ENCODE measurements at regions of chr5 and their contacts with region 1.

Region 1: DNA sequence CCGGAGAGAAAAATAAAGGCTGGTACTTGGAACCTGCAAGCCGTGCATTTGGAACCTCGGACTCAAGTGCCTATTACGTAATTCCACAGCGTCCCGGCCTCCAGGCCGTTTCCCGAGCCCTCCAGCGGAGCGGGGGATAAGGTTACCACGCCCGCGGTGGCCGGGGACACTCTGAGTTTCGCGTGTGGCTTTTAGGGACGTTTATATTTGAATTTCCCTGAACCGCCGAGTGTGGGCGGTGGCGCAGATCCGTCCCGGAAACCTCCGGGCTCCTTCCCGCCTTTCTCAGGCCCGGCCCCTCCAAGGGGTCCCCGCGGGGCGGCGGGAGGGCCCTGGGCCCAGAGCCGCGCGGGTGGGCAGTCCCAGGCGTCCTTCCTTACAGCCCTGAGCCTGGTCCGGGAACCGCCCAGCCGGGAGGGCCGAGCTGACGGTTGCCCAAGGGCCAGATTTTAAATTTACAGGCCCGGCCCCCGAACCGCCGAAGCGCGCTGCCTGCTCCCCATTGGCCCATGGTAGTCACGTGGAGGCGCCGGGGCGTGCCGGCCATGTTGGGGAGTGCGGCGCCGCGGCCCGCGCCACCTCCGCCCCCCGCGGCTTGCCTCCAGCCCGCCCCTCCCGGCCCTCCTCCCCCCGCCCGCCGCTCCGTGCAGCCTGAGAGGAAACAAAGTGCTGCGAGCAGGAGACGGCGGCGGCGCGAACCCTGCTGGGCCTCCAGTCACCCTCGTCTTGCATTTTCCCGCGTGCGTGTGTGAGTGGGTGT is at the start of gene LMNB1:
- DNase-seq: peak; percentile 98
- H3K4me3 ChIP-seq: peak within 1 kb of the TSS; percentile 74 to 85 (median 84)
- H3K27ac ChIP-seq: peak within 1 kb of the TSS; percentile 83 to 85
- H3K4me1 ChIP-seq: peaks cover 0 to 5% (median 3%) of the 10 kb centered on the region in 3 donors
- H3K27me3 ChIP-seq: no peaks in the 10 kb centered on the region
- CTCF ChIP-seq: no peak
- total RNA-seq, gene LMNB1: 10.3 TPM

Region 2: GRCh38 chr5:126656396-126657007 is 120.2 kb before region 1 on chr5:
- intact Hi-C with region 1: loop called (anchors 10 kb)
- DNase-seq: peak in 2 of 5 donors; percentile 66 to 79
- H3K4me3 ChIP-seq: no peak overlapping the region
- H3K27ac ChIP-seq: no peak overlapping the region
- H3K4me1 ChIP-seq: peaks cover 0 to 4% (median 0%) of the 10 kb centered on the region in 3 donors
- H3K27me3 ChIP-seq: no peaks in the 10 kb centered on the region
- CTCF ChIP-seq: peak; percentile 81

Region 3: GRCh38 chr5:126676195-126676624 is 100.5 kb before region 1 on chr5:
- intact Hi-C with region 1: loop called (anchors 10 kb)
- DNase-seq: peak in 4 of 5 donors; percentile 61 to 88 (median 74)
- H3K4me3 ChIP-seq: no peak overlapping the region
- H3K27ac ChIP-seq: no peak overlapping the region
- H3K4me1 ChIP-seq: no peaks in the 10 kb centered on the region
- H3K27me3 ChIP-seq: no peaks in the 10 kb centered on the region
- CTCF ChIP-seq: peak; percentile 74

Region 4: GRCh38 chr5:127683008-127683407 is 906.3 kb after region 1 on chr5:
- intact Hi-C with region 1: no loop called
- DNase-seq: no peak
- H3K4me3 ChIP-seq: no peak overlapping the region
- H3K27ac ChIP-seq: no peak overlapping the region
- H3K4me1 ChIP-seq: no peaks in the 10 kb centered on the region
- H3K27me3 ChIP-seq: no peaks in the 10 kb centered on the region
- CTCF ChIP-seq: no peak